ENCODE measurements at regions of chr13 and their contacts with region 1.

Region 1: DNA sequence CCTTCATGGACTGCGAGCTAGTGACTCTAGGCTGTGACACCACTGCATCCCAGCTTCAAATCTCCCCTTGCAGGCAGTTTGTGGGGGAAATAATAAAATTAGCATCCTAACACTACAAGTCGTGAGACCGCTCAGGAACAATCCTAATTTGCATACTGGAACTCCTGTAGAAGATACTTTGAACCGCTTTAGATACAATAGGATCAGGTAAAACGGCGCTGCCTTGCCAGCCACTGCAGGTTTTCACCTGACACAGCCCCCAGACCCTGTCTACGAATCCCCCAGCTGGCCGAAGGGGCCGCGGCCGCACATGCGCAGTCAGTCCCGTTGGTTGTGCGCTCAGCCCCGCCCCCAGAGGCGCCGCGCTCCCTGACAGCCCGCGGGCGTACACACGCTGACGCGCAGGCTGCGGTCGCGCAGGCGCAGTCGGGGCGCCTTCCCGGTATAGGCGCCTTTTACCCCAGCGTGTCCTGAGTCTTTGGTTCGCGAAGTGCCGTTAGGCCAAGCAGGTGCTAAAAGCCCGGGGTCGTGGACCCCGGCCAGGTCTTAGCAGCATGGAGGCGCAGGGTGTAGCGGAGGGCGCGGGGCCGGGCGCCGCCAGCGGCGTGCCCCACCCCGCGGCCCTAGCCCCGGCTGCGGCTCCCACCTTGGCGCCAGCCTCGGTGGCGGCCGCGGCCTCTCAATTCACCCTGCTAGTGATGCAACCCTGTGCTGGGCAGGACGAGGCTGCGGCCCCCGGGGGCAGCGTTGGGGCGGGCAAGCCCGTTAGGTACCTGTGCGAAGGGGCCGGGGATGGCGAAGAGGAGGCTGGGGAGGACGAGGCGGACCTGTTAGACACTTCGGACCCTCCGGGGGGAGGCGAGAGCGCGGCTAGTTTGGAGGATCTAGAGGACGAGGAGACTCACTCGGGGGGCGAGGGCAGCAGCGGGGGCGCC is at the start of gene RFXAP:
- DNase-seq: peak; percentile 75
- H3K4me3 ChIP-seq: peak within 1 kb of the TSS; percentile 71 to 90 (median 76)
- H3K27ac ChIP-seq: peak within 1 kb of the TSS; percentile 32
- H3K4me1 ChIP-seq: peaks cover 16% of the 10 kb centered on the region
- H3K27me3 ChIP-seq: no peaks in the 10 kb centered on the region
- CTCF ChIP-seq: no peak
- total RNA-seq, gene RFXAP: 3.3 to 4.4 TPM

Region 2: GRCh38 chr13:36530050-36530789 is 288.9 kb before region 1 on chr13:
- CTCF ChIA-PET with region 1: no interaction called
- dilution Hi-C with region 1: no loop called
- in situ Hi-C with region 1: no loop called
- intact Hi-C with region 1: loop called (anchors 10 kb)
- DNase-seq: peak; percentile 69
- H3K4me3 ChIP-seq: no peak overlapping the region
- H3K27ac ChIP-seq: no peak overlapping the region
- H3K4me1 ChIP-seq: peaks cover 38% of the 10 kb centered on the region
- H3K27me3 ChIP-seq: no peaks in the 10 kb centered on the region
- CTCF ChIP-seq: no peak

Region 3: DNA sequence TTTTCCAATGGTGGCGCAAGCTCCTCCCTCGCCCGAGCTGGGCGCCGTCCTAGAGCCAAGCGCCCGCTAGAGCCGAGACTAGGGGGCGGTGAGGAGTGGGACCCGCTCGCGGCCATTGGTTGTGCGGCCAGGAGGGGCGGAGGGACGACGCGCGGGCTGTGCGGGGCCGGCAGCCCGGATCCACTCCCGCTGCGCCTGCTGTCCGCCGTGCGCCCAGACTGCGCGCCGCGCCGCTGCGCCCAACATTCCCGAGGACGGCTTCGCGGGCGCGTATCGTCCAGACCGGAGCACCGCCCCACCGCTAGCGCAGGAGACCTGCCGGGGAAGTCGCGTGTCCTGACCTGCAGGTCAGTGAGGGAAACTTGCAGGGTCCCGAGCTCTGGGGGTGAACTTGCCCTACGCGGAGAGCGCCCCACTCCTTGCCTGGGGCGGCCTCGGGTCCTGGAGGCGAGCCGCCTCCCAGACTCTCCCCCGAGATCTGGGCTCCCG is 145.2 kb before region 1 on chr13 and contains the start of gene SERTM1:
- CTCF ChIA-PET with region 1: no interaction called
- dilution Hi-C with region 1: no loop called
- in situ Hi-C with region 1: no loop called
- intact Hi-C with region 1: no loop called
- DNase-seq: peak; percentile 27
- H3K4me3 ChIP-seq: peak within 1 kb of the TSS in 1 of 3 experiments; percentile 30
- H3K27ac ChIP-seq: no peak within 1 kb of the TSS
- H3K4me1 ChIP-seq: peaks cover 3% of the 10 kb centered on the region
- H3K27me3 ChIP-seq: peaks cover 20% of the 10 kb centered on the region
- CTCF ChIP-seq: no peak
- total RNA-seq, gene SERTM1: not detected

Region 4: GRCh38 chr13:36766314-36766713 is 52.8 kb before region 1 on chr13:
- CTCF ChIA-PET with region 1: no interaction called
- dilution Hi-C with region 1: no loop called
- in situ Hi-C with region 1: no loop called
- intact Hi-C with region 1: loop called (anchors 5 kb)
- DNase-seq: peak; percentile 84
- H3K4me3 ChIP-seq: no peak overlapping the region
- H3K27ac ChIP-seq: no peak overlapping the region
- H3K4me1 ChIP-seq: peaks cover 28% of the 10 kb centered on the region
- H3K27me3 ChIP-seq: no peaks in the 10 kb centered on the region
- CTCF ChIP-seq: no peak

Measured in mammary epithelial cell (primary cell).